WTC11 (cell line): ENCODE measurements at regions of chr3 and their contacts with region 1.

Region 1: GRCh38 chr3:40207796-40208195 is 101.7 kb upstream of the EIF1B start:
- DNase-seq: no peak
- ATAC-seq: no peak
- H3K4me3 Mint-ChIP-seq: no peak overlapping the region
- H3K27ac Mint-ChIP-seq: no peak overlapping the region
- H3K4me1 Mint-ChIP-seq: peaks cover 5% of the 10 kb centered on the region
- H3K27me3 Mint-ChIP-seq: no peaks in the 10 kb centered on the region
- CTCF ChIP-seq: no peak

Region 2: GRCh38 chr3:40317061-40317855 is 109.5 kb after region 1 on chr3:
- CTCF ChIA-PET with region 1: interaction called, 10 read pairs
- POLR2A ChIA-PET with region 1: no interaction called
- DNase-seq: no peak
- ATAC-seq: peak; percentile 75
- H3K4me3 Mint-ChIP-seq: no peak overlapping the region
- H3K27ac Mint-ChIP-seq: no peak overlapping the region
- H3K4me1 Mint-ChIP-seq: no peaks in the 10 kb centered on the region
- H3K27me3 Mint-ChIP-seq: no peaks in the 10 kb centered on the region
- CTCF ChIP-seq: peak; percentile 74